K562 (cell line): ENCODE measurements at regions of chr1 and their contacts with region 1.

Region 1: DNA sequence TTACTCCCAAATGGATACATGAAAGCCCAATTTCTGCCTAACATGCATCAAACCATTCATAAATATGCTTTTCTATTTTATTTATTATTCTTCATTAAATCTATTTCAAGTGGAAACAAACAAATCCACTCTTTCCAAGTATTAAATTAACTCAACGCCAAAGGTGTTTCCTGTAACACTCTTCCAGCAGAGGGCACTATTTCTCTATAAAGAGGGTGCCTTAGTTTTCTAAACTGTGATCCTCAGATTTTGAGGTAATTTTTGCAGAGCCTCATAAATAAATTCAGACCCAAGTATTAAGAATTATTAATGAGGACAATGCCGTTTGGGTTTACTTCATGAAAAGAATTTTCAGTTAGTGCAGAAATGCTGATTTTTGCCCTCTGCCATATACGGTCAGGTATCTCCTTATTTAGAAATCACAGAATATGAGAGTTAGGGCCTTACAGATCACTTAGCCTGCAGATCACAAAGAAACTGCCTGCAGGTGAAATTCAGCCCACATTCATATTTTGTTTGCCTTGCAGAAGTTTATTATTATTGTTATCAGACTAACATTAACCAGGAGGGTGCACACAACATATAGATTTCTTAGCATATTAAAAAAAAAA is 40.1 kb upstream of the MYSM1 start:
- DNase-seq: peak; percentile 44 to 69 (median 58)
- ATAC-seq: peak; percentile 86
- H3K4me3 ChIP-seq: no peak overlapping the region
- H3K27ac ChIP-seq: no peak overlapping the region
- H3K4me1 ChIP-seq: no peaks in the 10 kb centered on the region
- H3K27me3 ChIP-seq: peaks cover 4% of the 10 kb centered on the region in 2 experiments; a peak in 3 of 5 replicates
- CTCF ChIP-seq: peak; percentile 63 to 93 (median 64); a peak in 5 of 6 replicates
- EP300 ChIP-seq: no peak
- POLR2A ChIP-seq: no peak
- RAD21 ChIP-seq: peak; percentile 98

Region 2: GRCh38 chr1:58768971-58769808 is 29.2 kb after region 1 on chr1:
- CTCF ChIA-PET with region 1: interaction called, 19 read pairs
- POLR2A ChIA-PET with region 1: no interaction called
- in situ Hi-C with region 1: no loop called
- intact Hi-C with region 1: loop called (anchors 1 kb)
- DNase-seq: peak; percentile 67 to 75 (median 74)
- ATAC-seq: peak; percentile 87
- H3K4me3 ChIP-seq: no peak overlapping the region
- H3K27ac ChIP-seq: no peak overlapping the region
- H3K4me1 ChIP-seq: no peaks in the 10 kb centered on the region
- H3K27me3 ChIP-seq: peaks cover 11 to 12% of the 10 kb centered on the region in 2 experiments; a peak in 4 of 5 replicates
- CTCF ChIP-seq: peak; percentile 77 to 86 (median 82)
- EP300 ChIP-seq: no peak
- POLR2A ChIP-seq: no peak
- RAD21 ChIP-seq: peak; percentile 78 to 80

Region 3: DNA sequence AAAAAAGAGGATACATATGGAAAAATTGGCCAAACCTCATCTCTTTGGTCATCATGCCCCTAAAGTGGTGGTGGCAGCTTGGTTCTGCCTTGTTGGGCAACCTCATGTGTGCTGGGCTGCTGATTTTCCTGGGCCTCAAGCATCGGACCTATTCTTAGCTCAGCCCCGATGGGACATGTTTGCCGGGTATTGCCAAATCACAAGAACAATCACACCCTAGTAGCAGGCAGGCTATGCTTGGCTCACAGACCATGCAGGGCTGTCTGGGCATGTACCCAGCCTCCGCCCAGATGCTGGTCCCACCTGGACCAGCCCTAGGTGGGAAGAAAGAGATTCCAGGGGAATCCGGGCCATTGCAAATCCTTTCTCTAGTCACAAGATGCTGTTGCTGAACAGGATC is 367.6 kb after region 1 on chr1:
- CTCF ChIA-PET with region 1: no interaction called
- POLR2A ChIA-PET with region 1: no interaction called
- in situ Hi-C with region 1: no loop called
- intact Hi-C with region 1: loop called (anchors 5 kb)
- DNase-seq: no peak
- ATAC-seq: no peak
- H3K4me3 ChIP-seq: no peak overlapping the region
- H3K27ac ChIP-seq: no peak overlapping the region
- H3K4me1 ChIP-seq: no peaks in the 10 kb centered on the region
- H3K27me3 ChIP-seq: peaks cover 4 to 8% of the 10 kb centered on the region in 2 experiments; a peak in 2 of 5 replicates
- CTCF ChIP-seq: no peak
- EP300 ChIP-seq: no peak
- POLR2A ChIP-seq: no peak
- RAD21 ChIP-seq: no peak

Region 4: GRCh38 chr1:59707178-59707791 is 967.3 kb after region 1 on chr1:
- CTCF ChIA-PET with region 1: no interaction called
- POLR2A ChIA-PET with region 1: no interaction called
- in situ Hi-C with region 1: loop called (anchors 10 kb)
- intact Hi-C with region 1: no loop called
- DNase-seq: peak in 1 of 4 experiments; percentile 7
- ATAC-seq: no peak
- H3K4me3 ChIP-seq: no peak overlapping the region
- H3K27ac ChIP-seq: no peak overlapping the region
- H3K4me1 ChIP-seq: no peaks in the 10 kb centered on the region
- H3K27me3 ChIP-seq: no peaks in the 10 kb centered on the region; a peak in 2 of 5 replicates
- CTCF ChIP-seq: no peak
- EP300 ChIP-seq: no peak
- POLR2A ChIP-seq: no peak
- RAD21 ChIP-seq: no peak

Region 5: GRCh38 chr1:59767119-59767518 is 1027.2 kb after region 1 on chr1:
- CTCF ChIA-PET with region 1: no interaction called
- POLR2A ChIA-PET with region 1: no interaction called
- in situ Hi-C with region 1: loop called (anchors 10 kb)
- intact Hi-C with region 1: no loop called
- DNase-seq: no peak
- ATAC-seq: no peak
- H3K4me3 ChIP-seq: no peak overlapping the region
- H3K27ac ChIP-seq: no peak overlapping the region
- H3K4me1 ChIP-seq: peaks cover 0 to 7% of the 10 kb centered on the region in 2 experiments; a peak in 1 of 5 replicates
- H3K27me3 ChIP-seq: peaks cover 5 to 11% of the 10 kb centered on the region in 2 experiments; a peak in 2 of 5 replicates
- CTCF ChIP-seq: no peak
- EP300 ChIP-seq: no peak
- POLR2A ChIP-seq: no peak
- RAD21 ChIP-seq: no peak